ENCODE measurements at regions of chr7 and their contacts with region 1.

Region 1: DNA sequence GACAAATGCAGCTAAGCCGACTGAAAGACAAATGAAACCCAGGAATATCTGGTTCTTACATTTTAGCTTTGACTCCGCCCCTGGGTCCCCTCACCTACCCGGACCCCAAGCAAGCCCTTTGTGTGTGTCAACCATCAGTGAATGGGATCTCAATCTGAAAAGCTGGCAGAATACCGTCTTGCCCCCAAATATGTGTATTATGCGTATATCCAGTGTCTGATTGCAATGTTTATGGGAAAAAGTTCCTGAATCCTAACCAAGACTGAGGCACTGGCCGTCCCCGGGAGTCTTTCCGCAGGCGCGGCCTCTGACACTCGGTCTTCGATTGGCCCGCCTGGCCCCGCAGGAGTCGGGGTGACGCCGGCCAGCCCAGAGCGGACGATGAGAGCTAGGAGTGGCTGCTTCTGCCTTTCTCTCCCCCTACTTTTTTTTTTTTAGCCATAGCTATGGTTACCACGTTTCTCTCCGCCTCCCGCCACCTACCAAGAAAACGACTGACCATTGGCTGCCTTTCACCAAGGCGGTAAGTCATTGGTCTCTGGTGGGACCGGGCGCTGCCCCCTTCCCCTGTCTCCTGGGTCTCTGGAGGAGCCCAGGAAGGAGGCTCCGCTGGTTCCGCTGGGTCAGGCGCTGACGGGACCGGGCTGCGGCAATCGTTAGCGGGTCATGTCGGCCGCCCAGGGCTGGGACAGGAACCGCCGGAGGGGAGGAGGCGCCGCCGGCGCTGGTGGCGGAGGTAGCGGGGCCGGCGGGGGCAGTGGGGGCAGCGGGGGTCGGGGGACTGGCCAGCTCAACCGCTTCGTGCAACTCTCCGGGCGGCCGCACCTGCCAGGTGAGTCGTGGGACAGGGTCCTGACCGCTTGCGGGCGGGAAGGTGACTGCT is at the start of gene KLHDC10:
- DNase-seq: peak; percentile 97
- ATAC-seq: peak; percentile 98
- H3K4me3 Mint-ChIP-seq: peak within 1 kb of the TSS; percentile 91
- H3K27ac Mint-ChIP-seq: peak within 1 kb of the TSS; percentile 90
- H3K4me1 Mint-ChIP-seq: peaks cover 32% of the 10 kb centered on the region
- H3K27me3 Mint-ChIP-seq: no peaks in the 10 kb centered on the region
- total RNA-seq, gene KLHDC10: 13.5 to 14.2 TPM

Region 2: DNA sequence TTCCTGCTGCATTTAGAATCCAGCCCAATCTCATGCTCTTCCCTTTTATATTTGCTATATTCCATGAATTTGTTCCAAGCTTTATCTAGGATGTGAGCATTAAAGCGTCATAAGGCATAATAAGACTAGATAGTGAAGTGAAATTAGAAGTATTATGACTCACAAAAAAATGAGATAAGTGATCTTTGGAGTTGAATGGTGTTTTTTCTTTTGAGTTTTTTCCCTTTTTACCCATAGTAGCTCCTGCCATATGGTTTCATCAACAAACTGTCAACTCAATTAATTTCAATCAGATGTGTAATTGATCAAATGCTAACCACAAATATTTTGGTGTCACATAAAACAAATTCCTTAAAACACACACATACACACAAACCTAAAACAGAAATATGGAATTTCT is 17.1 kb after region 1 on chr7:
- CTCF ChIA-PET with region 1: interaction called, 17 read pairs
- POLR2A ChIA-PET with region 1: no interaction called
- intact Hi-C with region 1: no loop called
- DNase-seq: no peak
- ATAC-seq: no peak
- H3K4me3 Mint-ChIP-seq: no peak overlapping the region
- H3K27ac Mint-ChIP-seq: no peak overlapping the region
- H3K4me1 Mint-ChIP-seq: peaks cover 27% of the 10 kb centered on the region
- H3K27me3 Mint-ChIP-seq: no peaks in the 10 kb centered on the region

Region 3: GRCh38 chr7:130205084-130205947 is 135.1 kb after region 1 on chr7 and contains the start of gene TMEM209:
- CTCF ChIA-PET with region 1: interaction called, 3 read pairs
- POLR2A ChIA-PET with region 1: interaction called, 4 read pairs
- intact Hi-C with region 1: loop called (anchors 1 to 5 kb)
- DNase-seq: peak; percentile 96
- ATAC-seq: peak; percentile 98
- H3K4me3 Mint-ChIP-seq: peak within 1 kb of the TSS; percentile 93
- H3K27ac Mint-ChIP-seq: peak within 1 kb of the TSS; percentile 100
- H3K4me1 Mint-ChIP-seq: peaks cover 35% of the 10 kb centered on the region
- H3K27me3 Mint-ChIP-seq: no peaks in the 10 kb centered on the region
- total RNA-seq, gene TMEM209: 41.0 to 57.0 TPM

Region 4: DNA sequence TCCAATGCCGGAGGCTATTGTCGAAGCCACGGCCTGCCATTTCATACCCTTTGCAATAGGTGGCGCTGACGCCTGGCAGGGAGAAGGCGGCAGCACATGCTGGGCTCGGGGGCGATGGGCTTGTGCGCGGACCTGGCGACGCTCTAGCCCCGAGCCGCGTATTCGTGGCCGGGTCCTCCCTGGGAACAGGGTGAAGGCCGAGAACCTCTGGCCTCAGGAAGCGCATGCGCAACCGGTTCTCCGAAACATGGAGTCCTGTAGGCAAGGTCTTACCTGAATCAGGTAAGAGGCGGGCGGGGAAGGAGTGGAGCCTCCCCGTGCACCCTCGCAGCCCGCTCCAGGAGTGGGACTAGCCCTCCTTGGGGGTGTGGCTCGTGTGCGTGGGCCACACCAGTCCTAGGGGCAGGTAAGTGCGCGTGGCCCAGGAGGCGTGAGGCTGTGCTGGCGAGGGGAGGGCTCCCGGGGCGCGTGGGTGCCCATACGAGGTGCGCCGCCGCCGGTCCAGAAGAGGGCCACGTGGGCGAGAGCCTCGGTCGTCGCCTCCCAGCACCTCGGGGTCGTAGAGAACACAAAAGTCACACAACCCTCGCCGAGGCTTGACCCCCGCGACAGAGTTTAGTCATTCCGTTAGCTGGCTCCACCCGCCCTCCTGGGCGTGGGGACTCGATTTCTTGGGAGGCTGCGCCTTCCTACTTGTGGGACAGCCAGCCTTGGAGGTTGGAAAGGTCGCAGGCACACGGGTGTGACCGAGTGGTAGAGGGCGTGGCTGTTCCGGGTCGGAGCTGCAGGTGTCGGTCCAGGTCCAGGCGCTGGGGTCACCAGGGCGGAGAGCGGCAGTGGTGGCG is 416.1 kb after region 1 on chr7:
- CTCF ChIA-PET with region 1: interaction called, 4 read pairs
- POLR2A ChIA-PET with region 1: no interaction called
- intact Hi-C with region 1: loop called (anchors 1 to 5 kb)
- DNase-seq: peak; percentile 77
- ATAC-seq: peak; percentile 82
- H3K4me3 Mint-ChIP-seq: peak overlapping the region; percentile 61
- H3K27ac Mint-ChIP-seq: peak overlapping the region; percentile 43
- H3K4me1 Mint-ChIP-seq: peaks cover 24% of the 10 kb centered on the region
- H3K27me3 Mint-ChIP-seq: peaks cover 43% of the 10 kb centered on the region

Region 5: GRCh38 chr7:130733931-130734814 is 664.0 kb after region 1 on chr7 and contains the start of gene KLF14:
- CTCF ChIA-PET with region 1: no interaction called
- POLR2A ChIA-PET with region 1: no interaction called
- intact Hi-C with region 1: loop called in 1 of 2 experiments (anchors 5 kb)
- DNase-seq: peak; percentile 59
- ATAC-seq: peak; percentile 61
- H3K4me3 Mint-ChIP-seq: peak within 1 kb of the TSS; percentile 72
- H3K27ac Mint-ChIP-seq: no peak within 1 kb of the TSS
- H3K4me1 Mint-ChIP-seq: peaks cover 8% of the 10 kb centered on the region
- H3K27me3 Mint-ChIP-seq: peaks cover 62% of the 10 kb centered on the region
- total RNA-seq, gene KLF14: not detected

Measured in activated CD4-positive, alpha-beta T cell treated with anti-CD3 and anti-CD28 coated beads for 36 hours (primary cell).